Calu3 (cell line): ENCODE measurements at regions of chr4 and their contacts with region 1.

Region 1: GRCh38 chr4:69497076-69497475 is 1.4 kb upstream of the UGT2B4 start:
- DNase-seq: no peak
- H3K4me3 Mint-ChIP-seq: no peak overlapping the region
- H3K27ac Mint-ChIP-seq: no peak overlapping the region
- H3K4me1 Mint-ChIP-seq: no peaks in the 10 kb centered on the region
- H3K27me3 Mint-ChIP-seq: no peaks in the 10 kb centered on the region
- CTCF ChIP-seq: no peak

Region 2: DNA sequence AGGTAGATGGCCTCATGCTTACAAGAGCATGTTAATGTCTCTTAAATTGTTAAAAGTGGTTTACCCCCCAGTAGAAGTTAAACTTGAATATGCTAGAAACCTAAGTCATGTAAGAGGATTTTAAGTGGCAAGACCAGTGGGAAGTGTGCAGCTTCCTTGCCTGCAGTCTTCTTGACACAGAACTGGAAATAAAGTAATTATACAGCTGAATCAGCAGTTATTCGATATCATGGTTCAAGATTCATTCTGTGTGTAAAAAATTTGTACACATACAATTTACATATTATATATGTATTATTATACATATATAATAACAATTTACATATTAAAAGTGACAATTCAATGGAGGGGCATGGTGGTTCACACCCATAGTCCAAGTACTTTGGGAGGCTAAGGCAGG is 25.4 kb before region 1 on chr4:
- CTCF ChIA-PET with region 1: no interaction called
- intact Hi-C with region 1: loop called (anchors 1 kb)
- DNase-seq: no peak
- H3K4me3 Mint-ChIP-seq: no peak overlapping the region
- H3K27ac Mint-ChIP-seq: no peak overlapping the region
- H3K4me1 Mint-ChIP-seq: peaks cover 12% of the 10 kb centered on the region
- H3K27me3 Mint-ChIP-seq: no peaks in the 10 kb centered on the region
- CTCF ChIP-seq: no peak

Region 3: GRCh38 chr4:70544279-70544868 is 1047.3 kb after region 1 on chr4:
- CTCF ChIA-PET with region 1: no interaction called
- intact Hi-C with region 1: no loop called
- DNase-seq: peak; percentile 4
- H3K4me3 Mint-ChIP-seq: no peak overlapping the region
- H3K27ac Mint-ChIP-seq: no peak overlapping the region
- H3K4me1 Mint-ChIP-seq: no peaks in the 10 kb centered on the region
- H3K27me3 Mint-ChIP-seq: no peaks in the 10 kb centered on the region
- CTCF ChIP-seq: peak; percentile 33